CD14-positive monocyte (primary cell): ENCODE measurements at regions of chr12 and their contacts with region 1.

Region 1: DNA sequence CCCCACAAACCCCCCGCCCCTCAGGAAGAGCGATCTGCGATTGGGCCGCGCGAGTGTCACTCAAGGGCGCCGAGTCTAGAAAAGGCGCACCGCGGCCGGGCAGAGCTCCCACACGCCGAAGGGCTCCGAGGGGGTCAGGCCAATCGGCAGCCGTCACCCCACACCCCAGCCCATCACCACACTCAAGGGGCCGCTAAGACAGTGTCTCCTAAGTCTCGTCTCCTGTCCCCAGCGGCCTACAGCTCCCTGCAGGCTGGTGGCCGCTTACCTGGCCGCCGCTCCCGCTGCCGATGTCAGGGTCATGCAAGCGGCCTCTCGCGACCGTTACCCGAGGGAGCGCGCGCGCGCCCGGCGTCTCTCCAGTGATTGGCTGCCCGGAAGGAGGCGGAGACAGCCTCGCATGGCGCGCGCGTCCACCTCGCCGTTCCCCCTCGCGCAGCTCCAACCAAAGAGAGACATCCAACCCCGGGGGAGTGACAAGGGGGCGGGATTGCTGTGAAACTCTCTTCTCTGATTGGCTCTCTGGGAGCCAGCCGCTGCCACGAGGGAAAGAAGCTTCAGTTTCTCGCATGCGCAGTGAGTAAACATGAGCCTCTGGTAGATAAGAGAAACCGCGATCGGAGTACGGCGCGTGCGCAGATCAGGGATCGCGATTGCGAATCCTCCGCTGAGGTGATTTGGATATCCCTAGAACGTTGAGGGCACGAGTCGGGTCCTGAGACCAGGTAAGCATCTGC is at the starts of genes MPHOSPH9 and MTRFR:
- DNase-seq: peak; percentile 99 to 100 (median 99)
- H3K4me3 ChIP-seq: peak within 1 kb of the TSS; percentile 76 to 97 (median 88)
- H3K4me3 Mint-ChIP-seq: peak within 1 kb of the TSS; percentile 92 to 98
- H3K27ac ChIP-seq: peak within 1 kb of the TSS; percentile 82 to 84
- H3K27ac Mint-ChIP-seq: peak within 1 kb of the TSS; percentile 91 to 98 (median 96)
- H3K4me1 ChIP-seq: peaks cover 30 to 44% of the 10 kb centered on the region in 2 donors
- H3K4me1 Mint-ChIP-seq: peaks cover 46% of the 10 kb centered on the region
- H3K27me3 ChIP-seq: no peaks in the 10 kb centered on the region
- H3K27me3 Mint-ChIP-seq: peaks cover 0 to 2% (median 1%) of the 10 kb centered on the region in 3 donors
- CTCF ChIP-seq: no peak
- polyA plus RNA-seq, gene MPHOSPH9: 6.3 to 14.1 (median 9.2) TPM
- polyA plus RNA-seq, gene MTRFR: 1.7 to 2.1 (median 1.7) TPM

Region 2: DNA sequence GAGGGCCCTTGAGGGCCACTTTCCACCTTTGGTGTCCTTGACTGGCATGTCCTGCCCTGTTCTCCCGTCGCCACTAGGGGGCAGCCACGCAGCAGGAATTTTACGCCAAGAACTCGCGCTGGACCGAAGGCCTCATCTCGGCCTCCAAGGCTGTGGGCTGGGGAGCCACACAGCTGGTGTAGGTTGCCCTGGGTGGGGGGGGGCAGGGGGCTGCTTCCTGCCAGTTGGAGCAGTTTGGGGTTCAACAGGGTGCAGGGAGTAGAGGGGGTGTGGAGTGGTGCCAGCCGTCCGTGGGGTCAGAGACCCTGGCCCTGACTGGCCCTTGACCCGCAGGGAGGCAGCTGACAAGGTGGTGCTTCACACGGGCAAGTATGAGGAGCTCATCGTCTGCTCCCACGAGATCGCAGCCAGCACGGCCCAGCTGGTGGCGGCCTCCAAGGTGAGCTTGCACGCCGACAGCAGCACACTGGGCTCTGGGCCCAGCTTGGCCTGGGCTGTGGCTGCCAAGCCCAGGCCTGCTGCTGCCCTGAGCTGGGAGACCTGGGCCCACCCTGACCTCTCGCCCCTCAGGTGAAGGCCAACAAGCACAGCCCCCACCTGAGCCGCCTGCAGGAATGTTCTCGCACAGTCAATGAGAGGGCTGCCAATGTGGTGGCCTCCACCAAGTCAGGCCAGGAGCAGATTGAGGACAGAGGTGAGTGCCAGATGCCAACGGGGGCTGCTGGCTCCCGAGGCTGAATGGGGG is 372.5 kb before region 1 on chr12:
- intact Hi-C with region 1: loop called in 1 of 2 experiments (anchors 1 kb)
- DNase-seq: peak; percentile 74 to 80 (median 78)
- H3K4me3 ChIP-seq: no peak overlapping the region
- H3K4me3 Mint-ChIP-seq: no peak overlapping the region
- H3K27ac ChIP-seq: no peak overlapping the region
- H3K27ac Mint-ChIP-seq: peak overlapping the region in 2 of 7 donors; percentile 24 to 35
- H3K4me1 ChIP-seq: peaks cover 0 to 4% of the 10 kb centered on the region in 2 donors
- H3K4me1 Mint-ChIP-seq: no peaks in the 10 kb centered on the region
- H3K27me3 ChIP-seq: no peaks in the 10 kb centered on the region
- H3K27me3 Mint-ChIP-seq: peaks cover 0 to 2% (median 1%) of the 10 kb centered on the region in 3 donors
- CTCF ChIP-seq: peak; percentile 92

Region 3: GRCh38 chr12:122974274-122974891 is 258.6 kb before region 1 on chr12:
- intact Hi-C with region 1: loop called (anchors 5 to 10 kb)
- DNase-seq: peak; percentile 95 to 98 (median 96)
- H3K4me3 ChIP-seq: peak overlapping the region; percentile 62 to 99 (median 84)
- H3K4me3 Mint-ChIP-seq: peak overlapping the region; percentile 97
- H3K27ac ChIP-seq: peak overlapping the region; percentile 94 to 97
- H3K27ac Mint-ChIP-seq: peak overlapping the region; percentile 97 to 100 (median 99)
- H3K4me1 ChIP-seq: peaks cover 28 to 33% of the 10 kb centered on the region in 2 donors
- H3K4me1 Mint-ChIP-seq: peaks cover 26% of the 10 kb centered on the region
- H3K27me3 ChIP-seq: no peaks in the 10 kb centered on the region
- H3K27me3 Mint-ChIP-seq: no peaks in the 10 kb centered on the region
- CTCF ChIP-seq: no peak

Region 4: GRCh38 chr12:123427036-123427769 is 194.2 kb after region 1 on chr12:
- intact Hi-C with region 1: no loop called
- DNase-seq: peak in 1 of 3 donors; percentile 27
- H3K4me3 ChIP-seq: no peak overlapping the region
- H3K4me3 Mint-ChIP-seq: no peak overlapping the region
- H3K27ac ChIP-seq: peak overlapping the region in 1 of 2 donors; percentile 25
- H3K27ac Mint-ChIP-seq: peak overlapping the region in 6 of 7 donors; percentile 19 to 87 (median 52)
- H3K4me1 ChIP-seq: peaks cover 11 to 13% of the 10 kb centered on the region in 2 donors
- H3K4me1 Mint-ChIP-seq: peaks cover 13% of the 10 kb centered on the region
- H3K27me3 ChIP-seq: no peaks in the 10 kb centered on the region
- H3K27me3 Mint-ChIP-seq: no peaks in the 10 kb centered on the region
- CTCF ChIP-seq: no peak

Region 5: GRCh38 chr12:123761841-123762714 is 529.1 kb after region 1 on chr12 and contains the start of gene DNAH10:
- intact Hi-C with region 1: no loop called
- DNase-seq: peak; percentile 9 to 30 (median 13)
- H3K4me3 ChIP-seq: peak within 1 kb of the TSS; percentile 45 to 81 (median 50)
- H3K4me3 Mint-ChIP-seq: peak within 1 kb of the TSS; percentile 92 to 97
- H3K27ac ChIP-seq: no peak within 1 kb of the TSS
- H3K27ac Mint-ChIP-seq: peak within 1 kb of the TSS in 1 of 7 donors; percentile 30
- H3K4me1 ChIP-seq: peaks cover 12 to 17% of the 10 kb centered on the region in 2 donors
- H3K4me1 Mint-ChIP-seq: peaks cover 11% of the 10 kb centered on the region
- H3K27me3 ChIP-seq: peaks cover 0 to 8% of the 10 kb centered on the region in 2 donors
- H3K27me3 Mint-ChIP-seq: peaks cover 15 to 27% (median 16%) of the 10 kb centered on the region in 3 donors
- CTCF ChIP-seq: no peak
- polyA plus RNA-seq, gene DNAH10: not detected